Common myeloid progenitor, CD34-positive (primary cell): ENCODE measurements at regions of chr1 and their contacts with region 1.

Region 1: DNA sequence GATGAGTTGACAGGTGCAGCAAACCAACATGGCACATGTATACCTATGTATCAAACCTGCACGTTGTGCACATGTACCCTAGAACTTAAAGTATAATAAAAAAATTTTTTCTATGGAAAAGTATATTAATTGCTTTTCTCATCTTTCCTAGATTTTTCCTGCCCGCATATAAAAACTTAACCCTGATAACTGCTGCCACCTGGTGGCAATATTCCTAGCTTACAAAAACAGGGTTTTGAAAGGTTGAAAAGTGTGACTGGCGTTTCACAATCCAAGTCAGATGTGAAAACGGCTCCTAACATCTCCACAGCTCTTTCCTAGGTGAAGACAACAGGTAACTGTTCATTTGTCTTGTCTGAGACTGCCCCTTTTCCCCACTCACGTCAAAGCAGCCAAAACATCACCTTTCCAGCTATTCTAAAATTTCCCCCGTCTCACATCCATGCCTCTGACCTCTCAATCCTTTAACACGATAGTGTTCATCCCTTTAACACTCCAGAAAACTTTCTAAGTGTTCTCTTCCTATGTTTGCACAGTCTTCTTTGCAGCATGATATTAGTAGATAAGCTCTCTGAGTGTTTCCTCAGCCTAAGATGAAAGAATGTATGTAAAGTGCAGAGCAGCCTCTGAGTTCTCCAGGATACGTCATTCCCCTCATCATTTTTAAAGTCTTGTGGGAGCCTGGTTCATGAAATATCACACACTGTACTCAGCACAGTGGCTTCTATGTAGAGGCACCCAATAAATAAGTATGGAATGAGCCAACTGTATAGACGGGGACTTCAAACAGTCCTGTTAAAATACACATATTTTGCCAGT is 27.5 kb downstream of the OVGP1 start:
- DNase-seq: peak; percentile 39 to 60 (median 43)
- H3K4me3 ChIP-seq: no peak overlapping the region
- H3K27ac ChIP-seq: no peak overlapping the region
- H3K4me1 ChIP-seq: no peaks in the 10 kb centered on the region
- H3K27me3 ChIP-seq: no peaks in the 10 kb centered on the region

Region 2: DNA sequence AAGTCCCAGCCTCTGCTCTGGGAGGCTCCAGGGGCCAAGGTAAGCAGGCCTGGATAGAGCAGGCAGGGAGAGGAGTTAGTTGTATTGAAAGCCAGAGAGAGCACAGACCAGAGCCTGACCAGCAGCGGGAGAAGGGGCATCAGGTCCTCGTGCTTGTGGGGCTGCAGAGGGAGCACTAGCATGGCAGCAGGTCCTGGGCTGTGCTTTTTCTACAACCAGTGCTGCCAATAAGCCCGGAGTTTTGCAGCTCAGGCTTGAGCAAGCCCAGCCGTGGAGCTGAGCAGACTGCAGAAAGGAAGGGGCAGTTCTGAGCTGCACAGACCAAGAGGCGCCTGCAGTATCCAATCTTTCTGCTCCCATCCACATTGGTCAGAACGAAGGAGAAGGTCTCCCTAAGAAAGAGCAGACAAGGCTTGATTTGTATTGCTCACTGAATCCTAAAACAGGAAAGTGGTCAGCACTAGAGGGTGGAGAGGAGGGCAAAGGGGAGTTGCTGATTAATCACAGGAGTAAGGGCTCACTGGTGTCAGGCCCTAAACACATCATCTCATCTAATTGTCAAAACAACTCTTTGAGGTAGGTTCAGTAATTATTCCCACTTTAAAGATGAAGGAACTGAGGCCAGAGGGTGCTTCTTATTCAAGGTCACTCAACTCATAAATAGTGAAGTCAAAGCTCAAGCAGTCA is 202.3 kb before region 1 on chr1:
- CTCF ChIA-PET with region 1: interaction called, 33 read pairs
- POLR2A ChIA-PET with region 1: no interaction called
- DNase-seq: peak; percentile 55 to 76 (median 64)
- H3K4me3 ChIP-seq: no peak overlapping the region
- H3K27ac ChIP-seq: no peak overlapping the region
- H3K4me1 ChIP-seq: peaks cover 14 to 70% (median 38%) of the 10 kb centered on the region in 4 experiments
- H3K27me3 ChIP-seq: no peaks in the 10 kb centered on the region

Region 3: GRCh38 chr1:111222308-111223125 is 177.5 kb before region 1 on chr1:
- CTCF ChIA-PET with region 1: interaction called, 26 read pairs
- POLR2A ChIA-PET with region 1: no interaction called
- DNase-seq: peak in 2 of 3 donors; percentile 57 to 58
- H3K4me3 ChIP-seq: peak overlapping the region in 3 of 7 experiments; percentile 13 to 45 (median 33)
- H3K27ac ChIP-seq: peak overlapping the region in 1 of 2 experiments; percentile 31
- H3K4me1 ChIP-seq: peaks cover 22 to 46% (median 36%) of the 10 kb centered on the region in 4 experiments
- H3K27me3 ChIP-seq: no peaks in the 10 kb centered on the region

Region 4: DNA sequence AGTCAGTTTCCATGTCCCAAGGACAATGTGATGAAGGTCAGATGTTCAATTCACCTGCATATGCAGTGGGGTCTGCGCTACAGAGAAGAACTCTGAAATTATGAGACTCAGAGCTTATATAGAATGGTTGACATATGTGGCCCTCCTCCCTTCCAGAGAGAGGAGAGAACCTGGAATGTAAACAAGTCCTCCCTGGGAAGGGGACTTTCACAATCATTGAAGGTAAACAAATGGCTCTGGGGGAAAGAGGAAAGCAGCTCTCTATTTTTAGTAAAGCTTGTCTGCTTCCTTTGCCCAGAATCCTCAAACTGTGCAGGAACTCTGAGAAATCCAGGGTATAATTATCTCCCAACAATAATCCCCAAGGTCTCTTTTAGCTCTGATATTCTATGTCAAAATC is 17.8 kb after region 1 on chr1:
- CTCF ChIA-PET with region 1: interaction called, 19 read pairs
- POLR2A ChIA-PET with region 1: no interaction called
- DNase-seq: no peak
- H3K4me3 ChIP-seq: no peak overlapping the region
- H3K27ac ChIP-seq: no peak overlapping the region
- H3K4me1 ChIP-seq: no peaks in the 10 kb centered on the region
- H3K27me3 ChIP-seq: no peaks in the 10 kb centered on the region